ENCODE measurements at regions of chr12 and their contacts with region 1.

Region 1: GRCh38 chr12:124567661-124568373 is 405 bp upstream of the NCOR2 start:
- DNase-seq: peak; percentile 98

Region 2: DNA sequence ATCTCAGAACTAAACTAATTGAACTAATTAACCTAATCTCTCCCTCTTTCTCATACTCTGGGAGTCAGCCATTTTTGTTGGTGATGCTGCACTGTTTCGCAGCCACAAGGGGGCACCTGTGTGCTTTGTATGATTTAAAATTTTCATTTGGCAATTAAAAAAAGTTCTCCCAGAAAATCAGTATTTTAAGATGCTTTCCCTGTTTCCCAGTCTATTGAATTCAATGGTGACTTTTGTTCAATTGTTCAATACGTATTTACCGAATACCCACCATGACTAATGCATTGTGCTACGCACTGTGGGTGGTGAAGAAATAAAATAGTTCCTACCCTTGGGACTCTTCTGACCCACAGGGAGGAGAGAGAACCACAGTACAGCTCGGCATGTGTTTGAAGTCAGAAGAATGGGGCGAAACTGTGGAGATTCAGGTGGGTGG is 531.1 kb before region 1 on chr12:
- intact Hi-C with region 1: loop called in 1 of 2 experiments (anchors 5 kb)
- DNase-seq: no peak

Region 3: DNA sequence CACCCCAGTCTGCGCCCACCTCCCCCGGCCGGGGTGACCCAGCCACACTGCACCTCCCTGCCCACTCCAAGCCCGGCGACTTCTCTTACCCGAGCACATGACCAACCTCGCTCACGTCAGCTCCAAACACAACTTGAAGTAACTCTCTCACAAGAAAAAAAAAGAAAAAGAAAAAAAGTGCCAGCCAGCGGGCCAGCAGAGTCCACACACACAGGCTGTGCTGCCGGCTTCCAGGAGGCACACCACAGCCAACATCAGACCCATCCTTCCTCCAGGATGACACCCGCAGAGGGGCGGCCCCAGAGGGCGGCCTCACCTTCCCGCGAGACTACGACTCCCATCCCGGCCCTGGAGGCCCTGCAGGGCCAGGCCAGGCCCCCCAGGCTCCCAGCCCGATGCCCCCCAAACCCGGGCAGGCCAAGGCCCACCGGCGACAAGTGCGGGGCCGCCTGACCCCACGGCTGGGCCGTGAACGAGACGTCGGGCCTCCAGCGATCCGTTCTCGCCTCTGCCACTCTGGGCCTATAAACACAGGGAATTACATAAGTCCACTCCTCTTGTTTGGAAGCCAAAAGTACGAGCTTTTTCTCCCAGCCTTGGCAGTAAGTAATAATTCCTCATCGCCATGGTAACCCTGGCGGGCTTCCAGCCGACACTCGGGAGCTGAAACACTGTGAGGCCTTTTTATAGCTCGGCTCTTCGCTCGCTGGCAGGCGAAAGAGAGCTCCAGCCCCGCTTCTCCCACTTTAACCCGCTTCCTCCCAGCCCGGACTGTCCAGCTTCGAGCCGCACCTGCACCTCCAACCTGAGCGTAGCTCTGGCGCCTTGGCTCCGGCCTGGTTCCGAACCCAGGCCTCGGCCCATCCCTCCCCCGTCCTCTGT is 49.5 kb before region 1 on chr12:
- intact Hi-C with region 1: loop called in 1 of 2 experiments (anchors 5 kb)
- DNase-seq: peak; percentile 99

Region 4: DNA sequence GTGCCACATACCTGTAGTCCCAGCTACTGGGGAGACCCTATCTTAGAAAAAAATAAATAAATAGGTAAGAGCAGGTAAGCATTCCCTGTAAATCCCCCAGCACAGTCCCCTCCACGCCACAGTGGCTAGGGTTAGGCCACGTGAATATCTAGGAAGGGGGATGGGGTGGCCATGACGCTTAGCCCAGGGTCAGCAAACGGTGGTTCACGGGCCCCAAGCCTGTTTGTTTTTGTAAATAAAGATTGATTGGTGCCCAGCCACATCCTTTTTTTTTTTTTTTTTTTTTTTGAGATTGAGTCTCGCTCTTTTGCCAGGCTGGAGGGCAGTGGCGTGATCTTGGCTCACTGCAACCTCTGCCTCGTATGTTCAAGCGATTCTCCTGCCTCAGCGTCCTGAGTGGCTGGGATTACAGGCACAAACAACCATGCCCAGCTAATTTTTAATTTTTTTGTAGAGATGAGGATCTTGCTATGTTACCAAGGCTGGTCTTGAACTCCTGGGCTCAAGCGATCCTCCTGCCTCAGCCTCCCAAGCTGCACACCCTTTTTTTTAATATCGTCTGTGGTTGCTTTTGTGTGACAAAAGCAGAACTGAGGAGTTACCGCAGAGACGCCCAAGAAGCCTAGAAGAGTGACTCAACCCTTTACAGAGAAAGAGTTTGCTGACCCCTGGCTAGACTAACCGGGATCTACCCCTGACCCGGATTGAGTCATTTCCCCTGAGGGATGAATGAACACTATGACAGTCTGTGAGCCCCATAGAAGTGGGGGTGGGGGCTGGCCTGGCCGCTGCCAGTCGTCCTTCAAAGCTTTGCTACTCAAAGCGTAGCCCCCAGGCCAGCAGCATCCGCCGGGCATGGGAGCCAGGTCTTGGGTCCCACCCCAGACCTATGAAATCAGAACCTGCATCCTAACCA is 113.3 kb after region 1 on chr12:
- intact Hi-C with region 1: loop called in 1 of 2 experiments (anchors 5 kb)
- DNase-seq: no peak

Region 5: DNA sequence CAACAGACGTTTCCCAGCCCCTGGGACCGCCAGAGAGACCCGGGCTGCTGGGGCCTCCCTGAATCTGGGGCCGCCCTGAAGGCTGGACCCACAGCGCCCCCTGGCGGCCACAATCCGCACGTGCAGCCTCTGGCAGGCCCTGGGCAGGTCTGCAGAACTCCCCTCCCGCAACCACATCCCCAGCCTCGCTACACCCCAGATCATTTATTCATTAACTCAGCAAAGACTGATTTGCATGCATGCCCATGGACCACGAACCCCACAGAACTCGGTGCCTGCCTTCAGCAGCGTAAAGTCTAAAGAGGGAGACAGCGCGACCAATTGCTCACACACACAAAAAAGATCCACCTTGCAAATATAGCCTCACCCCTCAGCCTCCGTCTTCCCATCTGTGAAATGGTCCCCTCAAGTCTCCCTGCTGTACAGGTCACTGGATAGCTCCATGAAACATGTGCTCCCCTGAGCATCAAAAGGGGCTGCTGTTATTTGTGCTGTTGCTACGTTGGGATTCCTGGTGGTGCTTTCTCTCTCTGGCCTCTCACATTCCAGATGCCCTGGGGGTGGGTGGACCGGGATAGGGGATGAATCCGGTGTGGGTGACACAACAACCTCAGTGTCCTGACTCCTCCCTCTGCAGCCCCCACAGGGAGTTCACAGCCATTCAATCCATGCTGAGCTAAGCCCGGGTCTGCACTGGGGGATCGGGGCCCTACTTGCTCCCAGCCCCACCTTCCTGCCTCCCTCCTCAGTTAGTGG is 199.4 kb after region 1 on chr12:
- intact Hi-C with region 1: loop called in 1 of 2 experiments (anchors 2 kb)
- DNase-seq: peak; percentile 96

Region 6: DNA sequence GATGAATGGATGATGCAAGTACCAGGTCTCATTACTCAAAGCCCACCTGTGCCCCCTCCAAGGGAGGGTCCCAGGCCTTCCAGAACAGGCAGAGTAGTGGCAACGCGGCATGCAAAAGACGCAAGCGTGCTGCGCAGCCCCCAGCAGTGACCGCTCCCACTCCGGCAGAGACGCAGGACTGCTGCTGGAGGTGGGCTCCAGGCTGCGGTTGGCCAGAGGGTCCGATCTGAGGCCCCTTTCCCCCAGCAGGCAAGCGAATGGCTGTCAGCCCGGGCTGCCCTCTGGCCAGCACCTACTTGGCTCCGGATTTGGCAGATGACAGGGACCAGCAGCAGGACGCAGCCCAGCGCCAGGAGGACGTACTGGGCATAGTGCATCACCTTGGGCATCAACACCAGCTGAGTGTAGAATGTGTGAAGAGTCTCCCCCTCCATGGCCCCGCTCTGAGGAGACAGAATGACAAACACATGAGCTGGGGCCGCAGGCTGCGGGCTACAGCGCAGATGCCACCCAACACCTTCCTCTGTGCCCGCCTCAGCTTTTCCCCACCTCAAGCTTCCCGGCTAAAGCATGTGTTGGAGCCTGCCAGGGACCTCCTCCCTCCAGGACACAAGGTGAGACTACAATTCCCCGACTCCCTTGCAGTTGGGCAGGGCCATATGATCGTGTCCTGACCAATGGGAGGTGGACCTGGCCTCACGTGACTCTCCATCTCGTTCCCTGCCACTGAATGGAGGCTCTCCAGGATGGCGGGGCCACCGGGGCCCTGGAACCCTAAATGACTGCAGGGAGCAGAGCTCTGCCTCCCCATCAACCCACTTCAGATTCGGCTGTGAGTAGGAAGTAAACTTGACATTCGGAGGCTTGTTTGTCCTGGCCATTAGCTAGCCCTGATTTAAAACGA is 218.5 kb after region 1 on chr12:
- intact Hi-C with region 1: no loop called
- DNase-seq: peak; percentile 90

Measured in posterior vena cava (tissue), 2 donors.